ENCODE measurements at regions of chr10 and their contacts with region 1.

Region 1: DNA sequence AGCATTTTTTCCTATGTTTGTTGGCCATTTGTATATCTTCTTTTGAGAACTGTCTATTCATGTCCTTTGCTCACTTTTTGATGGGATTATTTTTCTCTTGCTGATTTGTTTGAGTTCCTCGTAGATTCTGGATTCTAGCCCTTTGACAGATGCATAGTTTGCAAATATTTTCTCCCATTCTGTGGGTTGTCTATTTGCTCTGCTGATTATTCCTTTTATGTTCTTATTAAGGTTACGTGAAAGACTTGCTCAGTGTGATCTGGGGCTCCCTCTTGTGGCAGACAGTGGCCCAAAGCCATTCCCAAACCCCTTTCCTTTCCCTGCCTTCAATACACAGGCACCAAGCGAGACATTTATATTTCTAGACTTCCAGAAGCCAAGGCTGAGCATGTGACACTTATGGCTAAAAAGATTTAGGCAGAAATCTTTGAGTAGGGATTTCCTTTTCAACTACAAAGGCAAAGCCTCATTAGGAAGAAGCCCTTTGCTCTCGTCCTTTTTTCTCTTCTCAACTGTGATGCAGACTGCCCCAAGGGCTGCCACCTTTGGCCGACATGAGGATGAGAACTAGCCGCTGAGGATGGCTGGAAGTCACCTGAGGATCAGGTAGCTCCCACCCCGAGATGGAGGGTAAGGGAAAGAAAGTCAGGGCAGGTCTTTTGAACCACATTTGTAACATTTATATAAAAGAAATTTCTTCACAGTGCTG is 23.6 kb downstream of the ST8SIA6 start:
- DNase-seq: peak; percentile 78
- H3K4me3 ChIP-seq: no peak overlapping the region
- H3K27ac ChIP-seq: no peak overlapping the region
- H3K4me1 ChIP-seq: no peaks in the 10 kb centered on the region
- H3K27me3 ChIP-seq: no peaks in the 10 kb centered on the region
- CTCF ChIP-seq: peak; percentile 87

Region 2: DNA sequence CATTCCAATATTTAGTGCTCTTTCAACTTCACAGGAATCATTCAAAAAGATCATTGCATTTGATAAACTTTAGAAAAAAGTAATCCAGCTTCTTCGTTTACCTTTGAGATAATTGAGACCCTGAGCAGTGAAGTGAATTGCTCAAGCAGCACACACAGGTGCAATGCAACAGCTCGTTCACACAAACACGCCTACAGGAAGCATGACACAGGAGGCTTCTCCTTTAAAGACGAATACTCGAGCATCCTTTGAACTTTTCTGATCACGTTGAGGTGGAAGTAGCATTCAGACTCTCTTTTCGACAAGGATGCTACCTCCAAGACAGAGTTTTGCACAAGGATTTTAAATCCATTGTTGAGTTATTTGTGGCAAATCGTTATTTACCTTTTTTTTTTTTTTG is 595.6 kb before region 1 on chr10:
- intact Hi-C with region 1: loop called (anchors 5 kb)
- DNase-seq: no peak
- H3K4me3 ChIP-seq: no peak overlapping the region
- H3K27ac ChIP-seq: no peak overlapping the region
- H3K4me1 ChIP-seq: peaks cover 6% of the 10 kb centered on the region
- H3K27me3 ChIP-seq: no peaks in the 10 kb centered on the region
- CTCF ChIP-seq: no peak

Region 3: DNA sequence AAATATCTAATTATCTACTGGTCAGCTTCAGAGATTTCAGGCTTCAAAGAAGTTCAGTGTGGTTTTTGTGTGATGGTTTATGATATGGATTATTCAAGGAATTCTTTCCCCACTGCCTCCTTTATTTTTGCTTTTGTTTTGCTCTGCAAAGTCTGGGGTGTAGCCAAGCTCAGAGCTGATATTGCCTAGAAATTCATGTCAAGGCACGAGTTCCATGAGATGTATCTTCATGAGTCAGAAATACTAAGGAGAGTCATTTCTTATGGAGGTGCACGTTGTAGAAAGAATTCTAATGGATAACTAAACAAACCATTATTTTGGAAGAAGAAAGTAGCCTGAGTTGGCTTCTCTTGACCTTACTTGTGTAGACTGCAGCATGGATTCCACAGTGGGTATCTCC is 165.3 kb before region 1 on chr10:
- intact Hi-C with region 1: no loop called
- DNase-seq: no peak
- H3K4me3 ChIP-seq: no peak overlapping the region
- H3K27ac ChIP-seq: no peak overlapping the region
- H3K4me1 ChIP-seq: no peaks in the 10 kb centered on the region
- H3K27me3 ChIP-seq: no peaks in the 10 kb centered on the region
- CTCF ChIP-seq: no peak

Region 4: DNA sequence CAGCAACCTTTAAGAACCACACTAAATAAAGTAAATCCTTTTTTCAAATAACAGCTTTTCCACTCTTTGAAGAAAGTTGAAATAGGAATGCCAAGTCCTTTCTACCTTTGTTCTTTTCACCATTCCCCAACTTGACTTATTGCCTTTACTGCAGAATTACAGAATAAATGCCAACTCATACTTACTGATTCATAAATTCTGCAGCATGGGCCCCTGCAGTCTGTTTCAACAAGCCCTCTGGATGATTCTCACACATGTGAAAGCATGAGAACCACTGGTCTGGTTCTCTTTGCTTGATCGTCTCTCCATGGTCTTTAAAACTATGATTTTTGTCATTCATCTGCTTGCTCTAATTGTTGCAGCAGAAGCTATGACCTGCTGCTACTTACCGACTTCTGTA is 130.3 kb after region 1 on chr10:
- intact Hi-C with region 1: no loop called
- DNase-seq: no peak
- H3K4me3 ChIP-seq: no peak overlapping the region
- H3K27ac ChIP-seq: no peak overlapping the region
- H3K4me1 ChIP-seq: no peaks in the 10 kb centered on the region
- H3K27me3 ChIP-seq: no peaks in the 10 kb centered on the region
- CTCF ChIP-seq: no peak

Region 5: DNA sequence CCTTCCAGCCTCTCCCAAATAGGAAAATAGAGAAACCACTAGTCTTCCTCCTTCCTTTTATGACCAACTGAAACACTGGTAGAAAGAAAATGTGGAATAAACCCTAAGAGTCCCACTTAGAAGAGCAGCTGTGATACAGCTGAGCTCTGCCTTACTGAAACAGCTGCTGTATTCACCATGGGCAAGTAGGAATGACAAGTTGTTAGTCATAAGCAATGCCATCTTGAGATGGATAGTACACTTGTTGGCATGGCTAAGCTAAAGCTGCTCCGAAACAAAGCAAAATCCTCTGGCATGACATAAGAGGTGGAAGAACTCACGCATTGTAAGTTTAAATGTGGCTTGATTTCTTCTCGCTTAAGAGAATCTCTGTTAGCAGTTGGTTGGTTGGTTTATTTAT is 272.9 kb after region 1 on chr10:
- intact Hi-C with region 1: no loop called
- DNase-seq: no peak
- H3K4me3 ChIP-seq: no peak overlapping the region
- H3K27ac ChIP-seq: no peak overlapping the region
- H3K4me1 ChIP-seq: no peaks in the 10 kb centered on the region
- H3K27me3 ChIP-seq: no peaks in the 10 kb centered on the region
- CTCF ChIP-seq: no peak